Common myeloid progenitor, CD34-positive (primary cell): ENCODE measurements at regions of chr15 and their contacts with region 1.

Region 1: DNA sequence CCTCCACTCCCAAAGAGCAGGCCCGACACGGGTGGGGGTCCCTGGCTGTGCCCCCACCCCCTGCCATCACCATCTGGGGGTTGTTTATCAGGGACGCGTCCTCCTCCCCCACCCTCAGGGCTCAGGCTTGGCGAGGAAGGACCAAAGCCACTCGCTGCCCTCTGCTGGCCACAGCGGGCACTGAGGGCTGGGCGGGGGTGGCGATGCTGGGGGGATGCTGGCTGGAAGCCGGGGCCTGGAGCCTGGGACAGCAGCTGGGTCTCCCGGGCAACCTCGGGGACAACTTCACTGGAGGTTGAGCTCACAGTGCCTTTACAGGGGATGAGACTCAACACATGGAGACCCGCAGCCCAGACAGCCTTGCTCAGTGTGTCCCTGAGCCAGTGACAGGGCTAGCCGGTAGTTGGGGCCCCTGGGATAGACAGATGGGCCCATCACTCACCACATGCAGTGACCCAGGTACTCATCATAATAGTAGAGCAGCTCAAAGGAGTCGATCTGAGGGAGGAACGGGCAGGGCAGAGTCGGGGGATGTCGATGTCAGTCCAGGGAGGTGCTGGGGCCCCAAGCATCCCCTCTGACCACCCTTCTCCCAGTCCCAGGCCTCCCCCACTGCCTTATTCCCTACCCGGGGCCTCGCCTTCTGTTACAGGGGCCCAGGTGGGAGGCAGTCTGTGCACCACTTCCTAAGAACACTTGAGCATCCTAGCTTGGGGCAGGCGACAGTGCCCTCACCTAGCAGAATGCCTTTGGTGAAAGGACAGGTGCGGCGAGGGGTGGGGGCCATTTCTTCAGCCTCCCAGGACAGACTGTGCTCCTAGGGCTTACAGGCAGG is 5.9 kb upstream of the CALML4 start:
- DNase-seq: peak in 2 of 3 donors; percentile 67
- H3K4me3 ChIP-seq: peak overlapping the region in 1 of 7 experiments; percentile 19
- H3K27ac ChIP-seq: no peak overlapping the region
- H3K4me1 ChIP-seq: peaks cover 0 to 44% (median 38%) of the 10 kb centered on the region in 4 experiments
- H3K27me3 ChIP-seq: no peaks in the 10 kb centered on the region

Region 2: DNA sequence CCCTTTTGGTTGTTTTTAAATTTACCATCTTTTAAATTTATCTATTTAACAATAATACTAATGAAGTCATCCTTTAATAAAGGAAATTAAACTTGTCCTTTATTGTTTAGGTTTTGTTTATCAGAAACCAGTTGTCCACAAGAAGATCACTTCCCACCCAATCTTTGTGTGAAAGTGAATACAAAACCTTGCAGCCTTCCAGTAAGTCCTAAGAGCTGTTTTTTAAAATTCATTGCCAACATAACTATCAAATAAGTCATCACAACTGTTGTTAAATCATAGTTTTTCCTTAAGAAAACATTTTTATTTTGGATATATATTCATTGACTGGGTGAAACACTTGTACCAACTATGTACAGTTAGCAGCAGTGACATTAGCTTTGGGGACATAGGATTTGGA is 65.3 kb before region 1 on chr15:
- CTCF ChIA-PET with region 1: no interaction called
- POLR2A ChIA-PET with region 1: no interaction called
- DNase-seq: no peak
- H3K4me3 ChIP-seq: no peak overlapping the region
- H3K27ac ChIP-seq: no peak overlapping the region
- H3K4me1 ChIP-seq: no peaks in the 10 kb centered on the region
- H3K27me3 ChIP-seq: no peaks in the 10 kb centered on the region

Region 3: GRCh38 chr15:68192804-68193486 is 18.1 kb before region 1 on chr15:
- CTCF ChIA-PET with region 1: interaction called, 21 read pairs
- POLR2A ChIA-PET with region 1: interaction called, 3 read pairs
- DNase-seq: no peak
- H3K4me3 ChIP-seq: no peak overlapping the region
- H3K27ac ChIP-seq: peak overlapping the region in 1 of 2 experiments; percentile 30
- H3K4me1 ChIP-seq: no peaks in the 10 kb centered on the region
- H3K27me3 ChIP-seq: no peaks in the 10 kb centered on the region

Region 4: GRCh38 chr15:68224546-68225250 is 13.7 kb after region 1 on chr15:
- CTCF ChIA-PET with region 1: interaction called, 15 read pairs
- POLR2A ChIA-PET with region 1: no interaction called
- DNase-seq: peak; percentile 68 to 94 (median 93)
- H3K4me3 ChIP-seq: no peak overlapping the region
- H3K27ac ChIP-seq: no peak overlapping the region
- H3K4me1 ChIP-seq: peaks cover 0 to 41% (median 25%) of the 10 kb centered on the region in 4 experiments
- H3K27me3 ChIP-seq: no peaks in the 10 kb centered on the region